Vagina (tissue), 2 donors: ENCODE measurements at regions of chr11 and their contacts with region 1.

Region 1: DNA sequence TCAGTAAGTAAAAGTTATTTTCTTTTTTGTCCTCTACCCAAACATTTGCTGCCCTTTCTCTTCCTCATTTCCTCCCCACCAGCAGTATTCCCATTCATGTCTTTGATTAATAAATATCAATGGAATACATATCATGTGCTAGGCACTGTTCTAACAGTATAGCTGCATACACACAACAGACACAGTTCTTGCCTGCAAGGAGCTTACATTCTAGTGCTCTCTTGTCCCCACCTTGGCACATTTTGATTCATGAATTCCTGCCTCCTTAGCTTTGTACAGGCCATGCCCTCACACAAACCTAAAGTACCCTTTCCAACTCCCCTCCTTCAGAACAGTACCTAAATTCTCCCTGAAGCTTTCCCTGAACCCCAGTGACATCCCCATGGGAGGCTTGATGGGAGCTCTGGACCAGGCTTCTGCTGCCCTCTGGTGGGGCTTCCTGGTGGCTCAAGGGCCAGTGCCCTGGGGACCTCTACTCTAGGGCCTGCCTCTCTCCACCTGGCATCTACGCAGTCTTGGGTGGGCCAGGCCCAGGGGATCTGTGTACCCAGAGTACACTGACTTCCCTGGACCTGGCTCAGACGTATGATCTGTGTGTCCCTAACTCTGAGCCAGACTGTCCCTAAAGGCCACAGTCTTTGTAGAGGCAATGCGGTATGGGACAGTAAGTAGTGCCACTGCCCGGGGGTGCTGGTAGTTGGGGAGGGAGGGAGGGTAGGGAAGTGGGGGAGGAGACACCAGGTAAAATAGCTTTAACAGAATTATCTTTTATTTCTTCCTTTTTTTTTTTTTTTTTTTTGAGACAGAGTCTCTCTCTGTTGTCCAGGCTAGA is 14.1 kb downstream of the RPS13 start:
- DNase-seq: no peak
- H3K4me3 ChIP-seq: no peak overlapping the region
- H3K27ac ChIP-seq: no peak overlapping the region
- H3K4me1 ChIP-seq: no peaks in the 10 kb centered on the region
- H3K27me3 ChIP-seq: no peaks in the 10 kb centered on the region
- CTCF ChIP-seq: peak; percentile 37 to 53 (median 41)
- POLR2A ChIP-seq: no peak

Region 2: DNA sequence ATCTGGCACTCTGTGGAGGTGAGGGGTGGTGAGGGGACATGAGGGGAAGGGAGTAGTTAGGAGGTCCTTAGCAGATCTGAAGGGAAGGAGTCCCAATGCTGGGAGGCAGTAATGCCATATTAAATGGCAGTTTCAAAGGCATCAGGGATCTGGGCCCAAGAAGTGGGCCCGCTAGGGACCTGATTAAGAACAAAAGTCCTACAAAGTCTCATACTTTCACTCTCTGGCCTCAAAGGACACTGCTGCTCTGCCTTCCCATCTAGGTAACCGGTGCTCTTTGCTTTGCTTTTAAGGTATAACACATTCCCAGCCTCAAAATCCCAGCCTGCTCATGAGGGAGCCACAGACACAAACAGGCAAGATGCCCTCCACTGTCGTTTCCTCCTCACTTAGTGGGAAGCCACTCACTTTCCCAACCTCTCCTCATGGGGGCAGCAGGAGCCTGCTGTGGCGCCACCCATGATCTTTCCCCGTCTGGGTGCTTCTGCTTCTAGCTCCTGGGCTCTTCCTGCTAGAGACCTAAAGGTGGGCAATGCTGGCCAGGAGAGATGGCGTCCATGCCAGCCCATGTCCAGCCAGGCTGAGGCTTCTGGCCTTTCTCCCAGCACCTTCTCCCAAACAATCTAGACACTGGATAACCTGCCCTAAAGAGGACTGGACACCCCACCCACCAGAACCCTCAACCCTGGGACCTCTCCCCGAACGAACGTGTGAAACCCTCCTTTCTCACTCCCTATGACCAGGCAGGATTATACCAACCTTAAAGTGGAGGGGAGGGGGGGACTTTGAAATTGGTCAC is 117.5 kb before region 1 on chr11:
- intact Hi-C with region 1: loop called (anchors 2 kb)
- DNase-seq: no peak
- H3K4me3 ChIP-seq: no peak overlapping the region
- H3K27ac ChIP-seq: no peak overlapping the region
- H3K4me1 ChIP-seq: no peaks in the 10 kb centered on the region
- H3K27me3 ChIP-seq: no peaks in the 10 kb centered on the region
- CTCF ChIP-seq: peak in 1 of 3 experiments; percentile 15
- POLR2A ChIP-seq: no peak